ENCODE measurements at regions of chr2 and their contacts with region 1.

Region 1: DNA sequence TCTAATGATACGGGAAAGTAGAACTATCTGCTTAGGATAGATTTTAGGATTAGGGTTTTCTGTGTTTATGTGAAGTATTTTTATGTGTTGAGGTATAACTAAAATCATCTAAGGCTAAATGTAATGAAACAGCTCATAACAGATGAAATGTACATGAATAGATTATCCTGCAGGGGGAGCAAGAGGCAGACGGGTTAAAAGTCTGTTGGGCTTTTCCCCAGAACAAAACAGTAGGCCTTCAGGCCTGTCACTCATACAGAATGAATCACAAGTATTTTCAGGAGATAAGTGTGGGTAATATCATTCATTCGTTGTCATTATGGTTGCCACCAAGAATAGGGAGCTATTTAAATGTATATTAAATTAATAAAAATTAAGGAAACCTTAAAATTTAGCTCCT is 107.9 kb upstream of the IL1R2 start:
- DNase-seq: no peak
- ATAC-seq: peak; percentile 69

Region 2: DNA sequence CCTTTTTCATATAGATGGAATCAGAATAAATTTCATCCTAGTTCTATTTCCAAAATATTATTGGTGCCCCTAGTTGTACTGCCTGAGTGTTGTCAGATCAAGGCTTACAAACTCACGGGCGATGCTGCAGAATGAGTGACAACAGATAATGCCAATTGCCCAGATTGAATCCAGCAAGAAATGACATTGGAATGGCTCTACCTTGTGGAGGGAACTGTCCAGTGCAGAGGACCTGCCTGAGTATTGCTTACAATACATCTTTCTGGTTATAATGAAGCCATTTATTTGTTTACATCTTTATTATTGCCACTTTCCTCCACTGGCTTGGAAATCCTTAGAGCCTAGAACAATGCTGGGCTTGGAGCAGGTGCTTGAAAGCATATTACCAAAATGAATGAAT is 100.1 kb after region 1 on chr2:
- intact Hi-C with region 1: loop called (anchors 10 kb)
- DNase-seq: no peak
- ATAC-seq: no peak

Region 3: DNA sequence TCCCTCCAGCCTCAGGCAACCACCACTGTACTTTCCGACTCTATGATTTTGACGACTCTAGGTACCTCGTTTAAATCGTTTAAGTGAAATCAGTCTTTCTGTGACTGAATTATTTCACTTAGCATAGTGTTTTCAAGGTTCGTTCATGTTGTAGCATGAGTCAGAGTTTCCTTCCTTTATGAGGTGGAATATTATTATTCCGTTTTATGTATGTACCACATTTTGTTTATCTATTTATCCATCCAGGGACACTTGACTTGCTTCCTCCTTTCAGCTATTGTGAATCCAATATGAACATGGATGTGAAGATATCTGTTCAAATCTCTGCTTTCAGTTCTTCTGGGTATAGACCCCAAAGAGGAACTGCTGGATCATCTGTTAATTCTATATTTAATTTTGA is 127.0 kb after region 1 on chr2:
- intact Hi-C with region 1: loop called (anchors 10 kb)
- DNase-seq: no peak
- ATAC-seq: peak; percentile 48

Region 4: GRCh38 chr2:102166189-102166845 is 282.5 kb after region 1 on chr2:
- intact Hi-C with region 1: loop called (anchors 10 kb)
- DNase-seq: no peak
- ATAC-seq: peak; percentile 76

Region 5: GRCh38 chr2:102240640-102241370 is 356.9 kb after region 1 on chr2:
- intact Hi-C with region 1: loop called (anchors 5 kb)
- DNase-seq: peak; percentile 94
- ATAC-seq: peak; percentile 92

Region 6: GRCh38 chr2:102442967-102443828 is 559.3 kb after region 1 on chr2:
- intact Hi-C with region 1: loop called (anchors 10 kb)
- DNase-seq: no peak
- ATAC-seq: no peak

Measured in Right ventricle myocardium inferior (tissue), 1 donor.